Right lobe of liver (tissue), 6 donors: ENCODE measurements at regions of chr15 and their contacts with region 1.

Region 1: DNA sequence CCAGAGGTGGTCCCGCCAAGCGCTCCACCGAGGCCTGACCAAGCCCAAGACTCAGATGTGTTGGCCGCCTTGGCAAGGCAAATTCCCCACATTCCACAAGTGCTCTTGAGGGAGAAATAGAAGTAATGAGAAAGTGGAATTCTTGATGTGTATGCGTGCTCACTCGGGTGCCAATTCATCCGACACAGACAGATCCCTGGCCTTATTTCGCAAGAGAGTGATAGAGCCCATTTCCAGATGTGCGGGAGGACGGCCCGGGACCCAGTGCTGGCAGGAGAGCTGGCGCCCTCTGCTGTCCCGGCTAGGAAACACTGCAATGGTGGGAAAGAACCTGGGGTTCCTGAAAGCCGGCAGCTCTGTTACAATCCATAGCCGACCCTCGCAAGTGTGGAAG is 76.0 kb downstream of the HMG20A start:
- DNase-seq: peak; percentile 86 to 88 (median 87)
- ATAC-seq: peak; percentile 95 to 99 (median 96)
- H3K4me3 ChIP-seq: no peak overlapping the region
- H3K27ac ChIP-seq: no peak overlapping the region
- H3K4me1 ChIP-seq: peaks cover 0 to 4% (median 0%) of the 10 kb centered on the region in 4 donors
- H3K27me3 ChIP-seq: no peaks in the 10 kb centered on the region
- CTCF ChIP-seq: peak; percentile 93 to 96 (median 94)
- POLR2A ChIP-seq: no peak

Region 2: GRCh38 chr15:77118882-77119321 is 377.8 kb before region 1 on chr15:
- intact Hi-C with region 1: loop called in 1 of 2 experiments (anchors 10 kb)
- DNase-seq: no peak
- ATAC-seq: peak; percentile 72 to 83 (median 81)
- H3K4me3 ChIP-seq: no peak overlapping the region
- H3K27ac ChIP-seq: no peak overlapping the region
- H3K4me1 ChIP-seq: no peaks in the 10 kb centered on the region
- H3K27me3 ChIP-seq: no peaks in the 10 kb centered on the region
- CTCF ChIP-seq: peak; percentile 64 to 79 (median 70)
- POLR2A ChIP-seq: no peak

Region 3: GRCh38 chr15:77440378-77440999 is 56.2 kb before region 1 on chr15:
- intact Hi-C with region 1: no loop called
- DNase-seq: no peak
- ATAC-seq: no peak
- H3K4me3 ChIP-seq: no peak overlapping the region
- H3K27ac ChIP-seq: no peak overlapping the region
- H3K4me1 ChIP-seq: peaks cover 0 to 17% (median 8%) of the 10 kb centered on the region in 4 donors
- H3K27me3 ChIP-seq: no peaks in the 10 kb centered on the region
- CTCF ChIP-seq: no peak
- POLR2A ChIP-seq: no peak

Region 4: DNA sequence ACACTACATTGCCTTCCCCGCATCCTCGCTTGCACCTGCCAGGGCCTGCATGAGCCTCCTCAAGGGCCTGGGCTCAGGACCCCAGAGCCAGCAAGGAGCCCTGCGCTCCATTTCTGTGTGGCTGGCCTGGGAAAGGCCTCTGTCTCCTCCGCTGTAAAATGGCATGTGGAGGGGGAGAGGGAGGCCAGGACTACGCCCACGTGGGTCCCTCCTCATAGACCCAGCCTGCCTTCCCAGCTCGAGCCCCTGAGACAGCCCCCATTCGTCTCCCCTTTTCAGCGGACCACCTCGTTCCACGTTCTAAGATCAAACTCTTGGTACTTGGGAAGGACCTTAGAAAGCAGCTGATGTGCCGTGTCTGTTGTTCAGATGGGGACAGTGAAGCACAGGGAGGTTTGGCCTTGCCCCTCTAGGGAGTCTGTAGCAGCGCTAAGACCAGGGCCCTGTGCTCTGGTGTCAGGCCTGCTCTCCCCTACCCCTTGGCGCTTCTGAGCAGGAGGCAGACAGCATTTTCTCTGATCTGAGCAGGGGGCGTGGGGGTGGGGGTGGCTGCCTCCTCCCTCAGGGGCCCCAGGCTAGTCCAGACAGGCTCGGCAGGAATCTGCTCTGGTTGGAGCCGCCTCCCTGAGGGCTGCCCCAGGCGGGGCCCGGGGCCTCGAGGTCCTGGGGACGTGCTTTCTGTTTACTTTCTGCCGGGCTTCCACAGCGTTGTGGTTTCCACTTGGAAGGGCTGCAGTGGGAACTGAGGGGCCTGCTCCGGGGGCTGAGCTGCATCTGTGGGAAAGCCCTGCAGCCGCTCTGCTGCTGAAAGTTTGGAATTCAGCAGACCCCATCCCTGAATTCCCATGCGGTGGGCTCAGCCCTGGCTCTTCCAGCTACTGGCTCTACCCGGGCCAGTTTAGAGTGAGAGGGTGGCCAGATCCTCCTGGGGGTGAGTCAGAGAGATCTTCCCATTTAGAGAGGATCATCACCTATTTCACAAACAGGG is 30.4 kb after region 1 on chr15:
- intact Hi-C with region 1: no loop called
- DNase-seq: peak in 1 of 3 donors; percentile 35
- ATAC-seq: peak in 1 of 4 donors; percentile 10
- H3K4me3 ChIP-seq: no peak overlapping the region
- H3K27ac ChIP-seq: no peak overlapping the region
- H3K4me1 ChIP-seq: no peaks in the 10 kb centered on the region
- H3K27me3 ChIP-seq: no peaks in the 10 kb centered on the region
- CTCF ChIP-seq: no peak
- POLR2A ChIP-seq: no peak